ENCODE measurements at regions of chr5 and their contacts with region 1.

Region 1: GRCh38 chr5:39570403-39571027 is 145.7 kb upstream of the DAB2 start:
- DNase-seq: peak in 1 of 2 experiments; percentile 65
- H3K4me3 ChIP-seq: no peak overlapping the region
- H3K27ac ChIP-seq: no peak overlapping the region
- H3K4me1 ChIP-seq: no peaks in the 10 kb centered on the region
- H3K27me3 ChIP-seq: no peaks in the 10 kb centered on the region
- CTCF ChIP-seq: peak; percentile 94

Region 2: GRCh38 chr5:38382898-38383297 is 1187.6 kb before region 1 on chr5:
- CTCF ChIA-PET with region 1: no interaction called
- POLR2A ChIA-PET with region 1: no interaction called
- intact Hi-C with region 1: loop called (anchors 10 kb)
- DNase-seq: peak; percentile 58 to 77
- H3K4me3 ChIP-seq: no peak overlapping the region
- H3K27ac ChIP-seq: no peak overlapping the region
- H3K4me1 ChIP-seq: no peaks in the 10 kb centered on the region
- H3K27me3 ChIP-seq: peaks cover 37% of the 10 kb centered on the region
- CTCF ChIP-seq: peak; percentile 88

Region 3: DNA sequence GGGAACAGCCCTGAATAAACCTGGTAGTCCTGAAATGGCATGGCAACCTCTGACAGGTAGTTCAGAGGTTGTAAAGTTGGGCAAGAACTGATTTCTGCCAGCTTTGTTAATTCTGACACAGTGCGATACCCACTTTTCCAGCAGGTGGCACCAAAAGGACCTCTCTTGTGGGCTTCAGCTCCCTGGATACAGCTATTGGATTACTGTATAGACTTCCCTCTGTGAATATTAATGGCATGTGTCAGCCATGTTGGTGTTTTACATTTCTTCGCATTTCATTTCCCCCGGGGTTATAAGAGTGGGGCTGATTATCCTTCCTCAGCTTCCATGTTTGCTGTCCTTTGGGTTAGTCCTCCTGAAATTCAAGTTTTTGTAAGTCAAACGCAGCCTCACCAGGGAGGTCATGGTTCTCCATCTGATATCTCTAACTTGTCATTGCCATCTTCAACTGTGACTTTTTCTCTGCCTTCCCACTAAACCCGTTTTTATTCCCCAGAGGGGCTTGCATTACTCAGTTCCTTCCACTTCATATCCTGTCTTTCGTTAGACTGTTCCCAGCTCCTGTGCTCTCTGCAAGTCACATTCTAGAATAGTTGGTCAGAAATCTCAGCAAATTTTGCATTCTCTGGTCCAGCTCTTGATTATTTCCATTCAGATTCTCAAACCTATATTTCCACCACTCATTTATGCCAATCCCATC is 1149.7 kb before region 1 on chr5:
- CTCF ChIA-PET with region 1: no interaction called
- POLR2A ChIA-PET with region 1: no interaction called
- intact Hi-C with region 1: loop called (anchors 5 kb)
- DNase-seq: peak; percentile 40 to 74
- H3K4me3 ChIP-seq: no peak overlapping the region
- H3K27ac ChIP-seq: no peak overlapping the region
- H3K4me1 ChIP-seq: no peaks in the 10 kb centered on the region
- H3K27me3 ChIP-seq: peaks cover 10% of the 10 kb centered on the region; the same call in 1 of the 2 replicates
- CTCF ChIP-seq: peak; percentile 81

Region 4: GRCh38 chr5:38994324-38994927 is 576.1 kb before region 1 on chr5:
- CTCF ChIA-PET with region 1: no interaction called
- POLR2A ChIA-PET with region 1: no interaction called
- intact Hi-C with region 1: loop called (anchors 2 kb)
- DNase-seq: peak; percentile 50 to 73
- H3K4me3 ChIP-seq: no peak overlapping the region
- H3K27ac ChIP-seq: no peak overlapping the region
- H3K4me1 ChIP-seq: no peaks in the 10 kb centered on the region
- H3K27me3 ChIP-seq: no peaks in the 10 kb centered on the region
- CTCF ChIP-seq: peak; percentile 80

Region 5: GRCh38 chr5:39283231-39283818 is 287.2 kb before region 1 on chr5:
- CTCF ChIA-PET with region 1: no interaction called
- POLR2A ChIA-PET with region 1: no interaction called
- intact Hi-C with region 1: loop called (anchors 1 kb)
- DNase-seq: peak; percentile 61 to 64
- H3K4me3 ChIP-seq: no peak overlapping the region
- H3K27ac ChIP-seq: no peak overlapping the region
- H3K4me1 ChIP-seq: no peaks in the 10 kb centered on the region
- H3K27me3 ChIP-seq: no peaks in the 10 kb centered on the region
- CTCF ChIP-seq: peak; percentile 91

Region 6: GRCh38 chr5:39376293-39376714 is 194.2 kb before region 1 on chr5:
- CTCF ChIA-PET with region 1: interaction called, 20 read pairs
- POLR2A ChIA-PET with region 1: no interaction called
- intact Hi-C with region 1: loop called (anchors 1 kb)
- DNase-seq: peak; percentile 63 to 66
- H3K4me3 ChIP-seq: no peak overlapping the region
- H3K27ac ChIP-seq: no peak overlapping the region
- H3K4me1 ChIP-seq: no peaks in the 10 kb centered on the region
- H3K27me3 ChIP-seq: no peaks in the 10 kb centered on the region
- CTCF ChIP-seq: peak; percentile 96

Region 7: GRCh38 chr5:41524174-41524573 is 1953.7 kb after region 1 on chr5:
- CTCF ChIA-PET with region 1: no interaction called
- POLR2A ChIA-PET with region 1: no interaction called
- intact Hi-C with region 1: loop called (anchors 10 kb)
- DNase-seq: no peak
- H3K4me3 ChIP-seq: no peak overlapping the region
- H3K27ac ChIP-seq: no peak overlapping the region
- H3K4me1 ChIP-seq: peaks cover 17% of the 10 kb centered on the region
- H3K27me3 ChIP-seq: no peaks in the 10 kb centered on the region
- CTCF ChIP-seq: peak; percentile 41; the same call in 1 of the 2 replicates

Measured in PC-9 (cell line).